Naive thymus-derived CD4-positive, alpha-beta T cell (primary cell): ENCODE measurements at regions of chr19 and their contacts with region 1.

Region 1: DNA sequence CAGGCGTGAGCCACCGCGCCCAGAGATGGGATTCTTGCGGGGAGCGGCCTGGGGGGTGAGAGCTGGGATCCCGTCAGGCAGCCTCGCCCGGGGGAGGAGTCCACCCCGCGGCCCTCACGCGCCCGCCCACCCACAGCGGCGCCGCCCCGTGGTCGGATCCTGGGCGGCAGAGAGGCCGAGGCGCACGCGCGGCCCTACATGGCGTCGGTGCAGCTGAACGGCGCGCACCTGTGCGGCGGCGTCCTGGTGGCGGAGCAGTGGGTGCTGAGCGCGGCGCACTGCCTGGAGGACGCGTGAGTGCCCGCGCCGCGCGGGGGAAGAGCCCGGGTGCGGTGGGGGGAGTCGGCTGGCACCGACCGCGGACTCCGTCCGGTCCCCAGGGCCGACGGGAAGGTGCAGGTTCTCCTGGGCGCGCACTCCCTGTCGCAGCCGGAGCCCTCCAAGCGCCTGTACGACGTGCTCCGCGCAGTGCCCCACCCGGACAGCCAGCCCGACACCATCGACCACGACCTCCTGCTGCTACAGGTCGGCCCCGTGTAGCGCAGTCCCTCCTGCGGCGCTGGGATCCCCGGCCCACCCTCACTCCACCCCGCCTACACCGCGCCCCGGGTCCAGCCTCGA is 1.1 kb downstream of the CFD start:
- DNase-seq: peak in 8 of 9 donors; percentile 46 to 69 (median 58)
- ATAC-seq: peak; percentile 55
- H3K4me3 ChIP-seq: no peak overlapping the region
- H3K4me3 Mint-ChIP-seq: peak overlapping the region in 6 of 10 donors; percentile 17 to 64 (median 46)
- H3K27ac ChIP-seq: no peak overlapping the region
- H3K27ac Mint-ChIP-seq: no peak overlapping the region
- H3K4me1 ChIP-seq: peaks cover 14 to 23% of the 10 kb centered on the region in 2 donors
- H3K4me1 Mint-ChIP-seq: peaks cover 0 to 21% (median 16%) of the 10 kb centered on the region in 7 donors
- H3K27me3 ChIP-seq: no peaks in the 10 kb centered on the region
- H3K27me3 Mint-ChIP-seq: peaks cover 0 to 18% (median 0%) of the 10 kb centered on the region in 5 donors

Region 2: DNA sequence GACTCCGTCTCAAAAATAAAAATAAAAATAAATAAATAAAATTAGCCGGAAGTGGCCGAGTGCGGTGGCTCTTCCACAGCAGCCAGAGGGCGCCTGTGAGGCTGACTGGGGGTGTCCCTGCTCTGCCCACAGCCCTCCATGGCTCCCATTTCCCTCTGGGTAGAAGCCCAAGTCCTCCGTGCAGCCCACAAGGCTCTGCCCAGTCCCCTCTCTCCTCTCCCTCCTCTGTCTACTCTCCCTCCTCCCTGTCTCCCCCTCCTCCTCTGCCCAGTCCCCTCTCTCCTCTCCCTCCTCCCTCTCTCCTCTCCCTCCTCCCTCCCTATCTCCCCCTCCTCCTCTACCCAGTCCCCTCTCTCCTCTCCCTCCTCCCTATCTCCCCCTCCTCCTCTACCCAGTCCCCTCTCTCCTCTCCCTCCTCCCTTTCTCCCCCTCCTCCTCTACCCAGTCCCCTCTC is 89.2 kb before region 1 on chr19:
- CTCF ChIA-PET with region 1: interaction called, 13 read pairs
- POLR2A ChIA-PET with region 1: no interaction called
- intact Hi-C with region 1: loop called (anchors 1 to 2 kb)
- DNase-seq: no peak
- ATAC-seq: peak; percentile 67
- H3K4me3 ChIP-seq: no peak overlapping the region
- H3K4me3 Mint-ChIP-seq: no peak overlapping the region
- H3K27ac ChIP-seq: no peak overlapping the region
- H3K27ac Mint-ChIP-seq: no peak overlapping the region
- H3K4me1 ChIP-seq: no peaks in the 10 kb centered on the region
- H3K4me1 Mint-ChIP-seq: peaks cover 0 to 4% (median 0%) of the 10 kb centered on the region in 7 donors
- H3K27me3 ChIP-seq: no peaks in the 10 kb centered on the region
- H3K27me3 Mint-ChIP-seq: peaks cover 0 to 8% (median 4%) of the 10 kb centered on the region in 5 donors

Region 3: DNA sequence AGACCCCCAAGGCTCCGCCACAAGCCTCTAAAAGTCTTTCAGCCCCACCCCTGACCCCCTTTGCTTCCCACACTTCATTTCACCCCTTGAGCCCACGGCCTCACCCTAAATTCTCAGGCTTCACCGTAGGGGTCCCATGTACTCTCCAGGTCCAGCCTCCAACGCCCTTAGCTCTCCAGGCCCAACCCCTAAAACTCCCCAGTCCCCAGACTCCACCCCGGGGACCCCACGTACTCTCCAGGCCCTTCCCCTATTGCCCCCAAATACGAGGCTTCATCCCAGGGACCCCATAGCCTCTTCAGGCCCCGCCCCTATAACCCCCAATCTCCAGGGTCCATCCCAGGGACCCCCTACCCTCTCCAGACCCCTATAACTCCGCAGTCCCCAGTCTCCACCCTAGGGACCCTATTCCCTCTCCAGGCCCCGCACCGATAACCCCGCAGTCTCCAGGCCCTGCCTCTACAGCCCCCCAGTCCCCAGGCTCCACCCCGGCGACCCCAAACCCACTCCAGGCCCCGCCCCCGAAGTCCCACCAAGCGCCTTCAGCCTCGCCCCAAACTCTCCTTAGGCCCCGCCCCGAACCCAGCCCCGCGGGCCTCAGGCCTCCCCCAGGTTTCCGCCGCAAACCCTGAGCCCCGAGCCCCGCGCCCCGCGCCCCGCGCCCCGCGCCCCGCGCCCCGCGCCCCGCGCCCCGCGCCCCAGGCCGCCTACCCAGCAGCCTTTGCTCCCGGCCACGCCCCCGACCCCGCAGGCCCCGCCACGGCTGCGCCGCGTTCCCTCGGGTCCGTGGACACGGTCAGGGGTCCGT is 31.9 kb after region 1 on chr19:
- CTCF ChIA-PET with region 1: interaction called, 6 read pairs
- POLR2A ChIA-PET with region 1: interaction called, 21 read pairs
- intact Hi-C with region 1: loop called (anchors 1 kb)
- DNase-seq: no peak
- ATAC-seq: peak; percentile 65
- H3K4me3 ChIP-seq: peak overlapping the region; percentile 72
- H3K4me3 Mint-ChIP-seq: peak overlapping the region; percentile 77 to 96 (median 92)
- H3K27ac ChIP-seq: peak overlapping the region; percentile 97
- H3K27ac Mint-ChIP-seq: peak overlapping the region; percentile 65 to 100 (median 99)
- H3K4me1 ChIP-seq: peaks cover 3 to 5% of the 10 kb centered on the region in 2 donors
- H3K4me1 Mint-ChIP-seq: peaks cover 4 to 42% (median 30%) of the 10 kb centered on the region in 7 donors
- H3K27me3 ChIP-seq: no peaks in the 10 kb centered on the region
- H3K27me3 Mint-ChIP-seq: peaks cover 0 to 4% (median 0%) of the 10 kb centered on the region in 5 donors

Region 4: DNA sequence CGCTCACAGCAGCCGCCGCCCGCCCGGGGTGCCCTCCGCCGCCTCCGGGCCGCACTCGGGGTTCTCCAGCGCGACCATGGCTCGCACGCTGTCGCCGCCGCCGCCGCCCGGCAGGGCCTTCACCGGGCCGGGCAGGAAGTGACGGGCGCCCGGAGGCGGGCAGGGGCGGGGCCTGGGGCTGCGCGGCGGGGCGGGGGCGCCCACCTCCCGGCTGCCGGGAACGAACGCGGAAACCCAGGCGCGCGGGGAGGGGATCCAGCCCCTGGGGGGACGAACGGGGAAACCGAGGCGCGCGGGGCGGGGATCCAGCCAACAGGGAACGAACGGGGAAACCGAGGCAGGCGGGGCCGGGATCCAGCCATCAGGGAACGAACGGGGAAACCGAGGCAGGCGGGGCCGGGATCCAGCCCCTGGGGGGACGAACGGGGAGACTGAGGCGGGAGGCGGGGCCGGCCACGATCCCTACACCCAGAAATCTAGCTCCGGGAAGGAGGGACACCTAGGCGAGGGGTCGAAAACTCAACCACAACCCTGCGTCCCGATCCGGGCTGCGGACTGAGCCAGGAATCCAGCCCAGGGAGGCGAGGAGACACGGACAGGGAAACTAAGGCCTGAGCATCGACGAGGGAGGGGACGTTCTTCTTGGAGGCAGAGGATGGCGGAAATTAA is 52.6 kb after region 1 on chr19 and contains the start of gene R3HDM4:
- CTCF ChIA-PET with region 1: interaction called, 26 read pairs
- POLR2A ChIA-PET with region 1: interaction called, 82 read pairs
- intact Hi-C with region 1: loop called in 1 of 2 experiments (anchors 2 kb)
- DNase-seq: peak; percentile 75 to 92 (median 83)
- ATAC-seq: peak; percentile 75
- H3K4me3 ChIP-seq: peak within 1 kb of the TSS; percentile 93
- H3K4me3 Mint-ChIP-seq: peak within 1 kb of the TSS; percentile 72 to 92 (median 88)
- H3K27ac ChIP-seq: peak within 1 kb of the TSS; percentile 100
- H3K27ac Mint-ChIP-seq: peak within 1 kb of the TSS; percentile 83 to 97 (median 95)
- H3K4me1 ChIP-seq: peaks cover 25 to 27% of the 10 kb centered on the region in 2 donors
- H3K4me1 Mint-ChIP-seq: peaks cover 19 to 54% (median 35%) of the 10 kb centered on the region in 7 donors
- H3K27me3 ChIP-seq: no peaks in the 10 kb centered on the region
- H3K27me3 Mint-ChIP-seq: peaks cover 0 to 2% (median 0%) of the 10 kb centered on the region in 5 donors
- total RNA-seq, gene R3HDM4: 123 to 219 (median 184) TPM

Region 5: GRCh38 chr19:984165-984967 is 123.8 kb after region 1 on chr19 and contains the start of gene WDR18:
- CTCF ChIA-PET with region 1: interaction called, 10 read pairs
- POLR2A ChIA-PET with region 1: interaction called, 14 read pairs
- intact Hi-C with region 1: loop called (anchors 1 to 2 kb)
- DNase-seq: peak; percentile 62 to 93 (median 76)
- ATAC-seq: peak; percentile 93
- H3K4me3 ChIP-seq: peak within 1 kb of the TSS; percentile 56
- H3K4me3 Mint-ChIP-seq: peak within 1 kb of the TSS; percentile 78 to 98 (median 92)
- H3K27ac ChIP-seq: peak within 1 kb of the TSS; percentile 99
- H3K27ac Mint-ChIP-seq: peak within 1 kb of the TSS; percentile 80 to 94 (median 90)
- H3K4me1 ChIP-seq: peaks cover 4 to 17% of the 10 kb centered on the region in 2 donors
- H3K4me1 Mint-ChIP-seq: peaks cover 6 to 21% (median 17%) of the 10 kb centered on the region in 7 donors
- H3K27me3 ChIP-seq: no peaks in the 10 kb centered on the region
- H3K27me3 Mint-ChIP-seq: no peaks in the 10 kb centered on the region
- total RNA-seq, gene WDR18: 20.7 to 63.8 (median 48.5) TPM

Region 6: DNA sequence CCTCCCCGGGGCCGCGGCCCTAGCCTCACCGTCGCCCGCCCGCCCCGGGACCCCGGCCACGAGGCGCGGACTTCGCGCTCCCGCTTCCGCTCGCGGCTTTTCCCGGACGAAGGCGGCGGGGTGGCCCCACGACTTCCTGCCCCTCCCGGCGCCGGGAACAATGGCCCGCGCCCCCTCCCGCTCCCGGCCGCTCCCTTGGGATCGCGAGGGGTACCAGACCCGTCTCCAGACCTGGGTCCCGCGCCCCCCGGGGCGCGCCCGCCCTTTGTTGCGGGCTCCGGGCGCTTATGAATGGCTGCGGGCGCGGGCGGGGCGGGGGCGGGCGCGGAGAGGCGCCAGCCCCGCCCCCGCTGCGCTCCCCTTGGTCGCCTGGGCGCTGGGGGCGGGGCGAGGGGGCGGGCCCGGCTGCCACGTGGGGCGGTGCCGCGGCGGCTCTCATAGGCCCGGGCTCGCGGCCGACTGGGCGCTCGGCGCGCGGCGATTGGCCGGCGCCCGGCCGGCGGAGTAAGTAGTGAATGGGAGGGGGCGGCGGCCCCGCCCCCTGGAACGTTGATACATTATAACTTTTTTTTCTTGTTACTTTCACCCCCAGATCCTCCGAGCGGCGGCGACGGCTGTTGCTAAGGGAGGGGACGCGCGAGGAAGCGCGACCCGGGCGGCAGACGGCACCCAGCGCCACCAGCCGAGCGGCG is 388.9 kb after region 1 on chr19:
- CTCF ChIA-PET with region 1: no interaction called
- POLR2A ChIA-PET with region 1: no interaction called
- intact Hi-C with region 1: loop called in 1 of 2 experiments (anchors 10 kb)
- DNase-seq: peak; percentile 88 to 97 (median 94)
- ATAC-seq: peak; percentile 74
- H3K4me3 ChIP-seq: peak overlapping the region; percentile 63
- H3K4me3 Mint-ChIP-seq: peak overlapping the region; percentile 80 to 95 (median 88)
- H3K27ac ChIP-seq: peak overlapping the region; percentile 94
- H3K27ac Mint-ChIP-seq: peak overlapping the region; percentile 62 to 95 (median 89)
- H3K4me1 ChIP-seq: peaks cover 22 to 27% of the 10 kb centered on the region in 2 donors
- H3K4me1 Mint-ChIP-seq: peaks cover 0 to 11% (median 10%) of the 10 kb centered on the region in 7 donors
- H3K27me3 ChIP-seq: no peaks in the 10 kb centered on the region
- H3K27me3 Mint-ChIP-seq: no peaks in the 10 kb centered on the region